Endothelial cell of umbilical vein (primary cell): ENCODE measurements at regions of chr13 and their contacts with region 1.

Region 1: DNA sequence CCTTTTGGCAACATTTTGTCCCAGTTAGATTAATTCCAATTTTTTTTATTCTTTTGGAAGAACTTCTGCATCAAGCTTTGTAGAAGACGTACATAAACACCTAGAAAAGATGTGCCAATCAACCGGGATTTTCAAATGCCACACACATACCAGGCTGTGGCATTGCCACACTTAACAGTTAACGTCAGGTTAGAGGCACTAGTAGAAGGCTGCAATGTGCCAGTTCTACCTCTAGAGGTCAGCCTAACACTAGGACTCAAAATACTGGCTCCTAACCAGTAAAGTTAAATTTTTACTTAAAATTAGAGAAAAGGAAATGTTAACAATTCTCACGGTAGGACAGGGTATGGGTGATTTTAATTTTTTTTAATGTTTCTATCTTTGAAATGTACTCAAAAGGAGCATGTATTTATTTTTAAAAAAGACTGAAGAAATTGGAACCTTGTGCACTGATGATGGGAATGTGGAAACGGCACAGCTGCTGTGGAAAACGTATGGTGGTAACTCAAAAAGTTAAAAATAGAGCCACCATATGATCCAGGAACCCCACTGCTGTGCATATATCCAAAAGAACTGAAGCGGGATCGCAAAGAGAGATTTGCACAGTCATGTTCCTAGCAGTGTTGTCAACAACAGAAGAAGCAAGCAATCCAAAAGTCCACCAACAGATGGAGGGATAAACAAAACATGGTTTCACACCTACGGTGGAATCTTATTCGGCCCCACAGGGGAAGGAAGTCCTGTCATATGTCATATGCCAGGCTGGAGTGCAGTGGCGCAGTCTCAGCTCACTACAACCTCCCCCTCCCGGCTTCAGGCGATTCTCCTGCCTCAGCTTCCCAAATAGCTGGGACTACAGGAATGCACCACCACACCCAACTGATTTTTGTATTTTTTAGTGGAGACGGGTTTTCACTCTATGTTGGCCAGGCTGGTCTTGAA is 30.3 kb downstream of the CRYL1 start:
- DNase-seq: peak; percentile 76
- H3K4me3 ChIP-seq: no peak overlapping the region
- H3K27ac ChIP-seq: peak overlapping the region; percentile 34
- H3K4me1 ChIP-seq: peaks cover 4% of the 10 kb centered on the region
- H3K27me3 ChIP-seq: no peaks in the 10 kb centered on the region
- CTCF ChIP-seq: peak; percentile 73
- POLR2A ChIP-seq: no peak

Region 2: DNA sequence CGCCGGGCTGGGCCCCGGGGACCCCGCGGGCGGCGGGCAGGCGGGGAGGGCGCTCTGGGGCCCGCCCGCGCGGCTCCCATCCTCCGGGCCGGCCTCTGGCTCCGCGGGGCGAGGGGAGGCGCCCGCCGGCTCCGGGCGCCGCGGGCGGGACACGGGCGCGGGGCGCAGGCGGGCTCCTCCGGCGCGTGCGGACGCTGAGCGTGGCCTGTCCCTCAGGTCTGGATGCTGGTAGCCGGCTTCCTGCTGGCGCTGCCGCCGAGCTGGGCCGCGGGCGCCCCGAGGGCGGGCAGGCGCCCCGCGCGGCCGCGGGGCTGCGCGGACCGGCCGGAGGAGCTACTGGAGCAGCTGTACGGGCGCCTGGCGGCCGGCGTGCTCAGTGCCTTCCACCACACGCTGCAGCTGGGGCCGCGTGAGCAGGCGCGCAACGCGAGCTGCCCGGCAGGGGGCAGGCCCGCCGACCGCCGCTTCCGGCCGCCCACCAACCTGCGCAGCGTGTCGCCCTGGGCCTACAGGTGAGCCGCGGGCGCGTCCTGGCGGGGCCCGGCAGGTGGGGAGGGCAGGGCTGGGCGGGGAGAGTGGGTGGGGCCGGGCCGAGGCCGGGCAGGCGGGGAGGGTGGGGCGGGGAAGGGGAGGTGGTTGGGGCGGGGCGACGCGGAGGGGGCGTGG is 208.6 kb after region 1 on chr13:
- CTCF ChIA-PET with region 1: interaction called, 43 read pairs
- POLR2A ChIA-PET with region 1: no interaction called
- dilution Hi-C with region 1: no loop called
- intact Hi-C with region 1: loop called (anchors 1 kb)
- DNase-seq: peak; percentile 66
- H3K4me3 ChIP-seq: peak overlapping the region in 2 of 3 experiments; percentile 49 to 52
- H3K27ac ChIP-seq: no peak overlapping the region
- H3K4me1 ChIP-seq: peaks cover 8% of the 10 kb centered on the region
- H3K27me3 ChIP-seq: no peaks in the 10 kb centered on the region
- CTCF ChIP-seq: peak; percentile 64 to 69
- POLR2A ChIP-seq: peak; percentile 26

Region 3: DNA sequence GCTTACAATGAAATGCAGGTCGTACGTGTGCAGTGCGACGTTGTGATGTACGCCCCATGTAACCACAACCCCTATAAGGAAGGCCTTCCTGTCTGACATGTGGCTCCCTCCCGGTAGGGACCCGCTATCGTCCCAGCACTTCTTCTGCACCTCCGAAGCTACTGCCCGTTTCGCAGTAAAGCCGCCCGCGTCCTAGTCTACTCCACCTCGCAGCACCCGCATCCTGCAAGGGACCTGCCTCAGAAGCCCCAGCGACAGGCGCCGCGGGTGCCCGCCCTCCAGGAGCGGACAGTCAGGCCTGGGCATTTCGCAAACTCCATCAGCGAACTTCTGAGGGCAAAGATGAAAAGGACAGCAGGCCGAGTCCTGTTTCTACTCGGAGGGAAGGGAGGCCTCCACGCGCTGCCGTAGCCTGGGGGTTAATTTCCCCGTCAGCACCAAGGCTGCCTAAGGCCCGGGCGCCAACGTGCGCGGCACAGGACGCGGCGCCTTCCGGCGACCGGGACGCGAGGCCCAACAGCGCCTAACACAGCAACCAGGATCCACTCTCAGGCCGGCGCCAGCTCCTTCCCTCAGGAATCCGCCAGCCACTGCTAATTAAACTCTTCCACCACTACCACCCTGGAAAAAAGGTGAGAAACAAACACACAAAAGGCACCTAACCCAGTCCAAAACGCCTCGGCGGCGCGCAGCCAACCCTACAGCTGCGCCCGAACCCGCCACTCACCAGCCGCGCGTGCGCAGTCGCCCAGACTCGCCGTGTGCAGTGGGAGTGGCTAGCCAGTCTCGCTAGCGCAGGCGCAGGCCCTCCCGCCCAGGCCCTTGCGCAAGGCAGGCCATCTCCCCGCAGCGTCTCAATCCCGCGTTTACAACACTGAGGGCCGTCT is 278.1 kb after region 1 on chr13 and contains the start of gene EEF1AKMT1:
- CTCF ChIA-PET with region 1: no interaction called
- POLR2A ChIA-PET with region 1: no interaction called
- dilution Hi-C with region 1: no loop called
- intact Hi-C with region 1: loop called (anchors 5 kb)
- DNase-seq: peak; percentile 91
- H3K4me3 ChIP-seq: peak within 1 kb of the TSS; percentile 13 to 60 (median 35)
- H3K27ac ChIP-seq: peak within 1 kb of the TSS; percentile 88
- H3K4me1 ChIP-seq: peaks cover 18% of the 10 kb centered on the region
- H3K27me3 ChIP-seq: no peaks in the 10 kb centered on the region
- CTCF ChIP-seq: no peak
- POLR2A ChIP-seq: peak; percentile 56
- total RNA-seq, gene EEF1AKMT1: 8.7 and 11.1 TPM in 2 replicates

Region 4: GRCh38 chr13:20843166-20843565 is 347.8 kb after region 1 on chr13:
- CTCF ChIA-PET with region 1: interaction called, 10 read pairs
- POLR2A ChIA-PET with region 1: no interaction called
- dilution Hi-C with region 1: no loop called
- intact Hi-C with region 1: no loop called
- DNase-seq: peak; percentile 88
- H3K4me3 ChIP-seq: no peak overlapping the region
- H3K27ac ChIP-seq: no peak overlapping the region
- H3K4me1 ChIP-seq: peaks cover 5% of the 10 kb centered on the region
- H3K27me3 ChIP-seq: no peaks in the 10 kb centered on the region
- CTCF ChIP-seq: no peak
- POLR2A ChIP-seq: no peak

Region 5: GRCh38 chr13:20969182-20969581 is 473.8 kb after region 1 on chr13:
- CTCF ChIA-PET with region 1: no interaction called
- POLR2A ChIA-PET with region 1: no interaction called
- dilution Hi-C with region 1: no loop called
- intact Hi-C with region 1: no loop called
- DNase-seq: peak; percentile 39
- H3K4me3 ChIP-seq: no peak overlapping the region
- H3K27ac ChIP-seq: no peak overlapping the region
- H3K4me1 ChIP-seq: no peaks in the 10 kb centered on the region
- H3K27me3 ChIP-seq: peaks cover 0 to under 1% of the 10 kb centered on the region in 2 experiments
- CTCF ChIP-seq: no peak
- POLR2A ChIP-seq: no peak